ENCODE measurements at regions of chr18 and their contacts with region 1.

Region 1: GRCh38 chr18:26648509-26649192 is 100.3 kb upstream of the KCTD1 start:
- H3K4me3 Mint-ChIP-seq: no peak overlapping the region
- H3K27ac Mint-ChIP-seq: no peak overlapping the region
- H3K4me1 Mint-ChIP-seq: peaks cover 13% of the 10 kb centered on the region
- H3K27me3 Mint-ChIP-seq: peaks cover 64% of the 10 kb centered on the region

Region 2: DNA sequence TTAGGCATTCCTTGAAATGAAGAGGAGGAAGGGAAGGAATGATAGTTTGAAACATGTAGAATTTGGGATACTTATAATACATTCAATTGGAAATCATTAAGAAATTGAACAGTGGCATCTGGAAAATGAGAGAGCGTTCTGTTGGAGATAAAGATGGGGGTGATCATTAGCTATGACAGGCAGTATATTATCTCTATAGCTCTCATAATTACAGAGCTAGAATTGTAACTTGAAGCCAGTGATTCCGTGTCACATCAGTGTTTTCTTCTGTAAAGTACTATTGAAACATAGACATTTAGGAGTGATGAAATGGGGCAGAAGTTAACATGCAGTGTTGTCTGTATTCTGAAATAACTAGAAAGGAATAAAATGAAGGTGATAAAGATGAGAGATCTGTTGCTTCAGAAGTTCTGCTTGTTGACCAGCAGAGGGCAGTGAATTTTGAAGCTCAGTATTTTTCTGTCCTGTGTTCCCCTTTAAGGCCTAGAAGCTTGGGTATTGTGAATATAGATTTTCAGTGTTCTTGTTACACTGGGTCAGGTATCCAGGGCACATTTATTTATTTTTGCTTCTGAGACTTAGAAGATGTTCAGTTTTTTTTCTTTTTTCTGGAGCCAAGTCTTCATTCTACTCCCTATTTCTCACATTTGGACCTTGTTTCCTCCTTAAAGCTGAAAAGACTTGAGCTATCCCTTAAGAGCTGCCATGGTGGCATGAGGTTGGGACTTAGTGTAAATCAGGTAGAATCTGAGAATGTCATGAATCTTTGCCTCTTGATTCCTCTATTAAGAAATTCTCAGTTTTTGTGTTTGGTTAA is 265.0 kb before region 1 on chr18:
- intact Hi-C with region 1: loop called (anchors 2 kb)
- H3K4me3 Mint-ChIP-seq: no peak overlapping the region
- H3K27ac Mint-ChIP-seq: no peak overlapping the region
- H3K4me1 Mint-ChIP-seq: no peaks in the 10 kb centered on the region
- H3K27me3 Mint-ChIP-seq: no peaks in the 10 kb centered on the region

Region 3: DNA sequence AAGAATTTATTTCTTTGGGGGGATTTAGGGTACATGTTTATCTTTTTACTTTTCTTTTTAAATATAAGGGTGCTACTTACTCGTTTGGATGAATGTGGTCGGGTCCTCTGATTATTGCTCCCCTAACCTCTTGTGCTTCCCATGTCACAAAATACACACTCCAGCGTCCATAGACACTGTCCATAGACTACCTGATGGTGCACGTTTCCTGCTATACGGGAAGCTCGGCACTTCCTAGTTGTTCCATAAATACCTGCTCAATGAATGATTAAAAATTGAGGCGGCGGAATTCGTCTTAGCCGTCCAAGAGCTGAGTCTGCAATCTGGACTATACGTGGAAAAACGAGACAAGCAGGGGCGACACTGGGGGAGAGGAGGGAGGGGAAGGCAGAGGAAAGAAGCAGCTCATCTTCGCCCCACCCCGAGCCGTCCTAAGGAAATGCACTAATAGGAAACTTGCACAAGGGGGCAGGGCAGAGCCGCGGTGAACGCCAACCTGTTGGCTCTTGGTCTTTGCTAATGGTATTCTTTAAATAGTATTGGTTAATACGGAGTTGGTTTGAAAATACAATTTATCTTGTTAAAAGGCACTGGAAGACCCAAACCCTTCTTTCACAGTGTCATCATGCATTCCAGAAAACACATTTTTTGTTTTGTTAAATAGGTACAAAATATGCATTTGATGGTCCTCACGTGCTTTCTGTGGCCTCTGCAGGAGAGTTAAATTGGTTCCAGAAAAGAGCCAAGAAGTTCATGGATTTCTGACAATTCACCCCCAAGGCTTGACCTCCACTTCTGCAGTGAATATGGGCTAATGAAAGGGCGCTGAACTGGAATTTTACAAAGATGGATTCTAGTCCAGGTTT is 27.3 kb before region 1 on chr18:
- intact Hi-C with region 1: loop called (anchors 1 kb)
- H3K4me3 Mint-ChIP-seq: no peak overlapping the region
- H3K27ac Mint-ChIP-seq: no peak overlapping the region
- H3K4me1 Mint-ChIP-seq: peaks cover 12% of the 10 kb centered on the region
- H3K27me3 Mint-ChIP-seq: no peaks in the 10 kb centered on the region

Region 4: DNA sequence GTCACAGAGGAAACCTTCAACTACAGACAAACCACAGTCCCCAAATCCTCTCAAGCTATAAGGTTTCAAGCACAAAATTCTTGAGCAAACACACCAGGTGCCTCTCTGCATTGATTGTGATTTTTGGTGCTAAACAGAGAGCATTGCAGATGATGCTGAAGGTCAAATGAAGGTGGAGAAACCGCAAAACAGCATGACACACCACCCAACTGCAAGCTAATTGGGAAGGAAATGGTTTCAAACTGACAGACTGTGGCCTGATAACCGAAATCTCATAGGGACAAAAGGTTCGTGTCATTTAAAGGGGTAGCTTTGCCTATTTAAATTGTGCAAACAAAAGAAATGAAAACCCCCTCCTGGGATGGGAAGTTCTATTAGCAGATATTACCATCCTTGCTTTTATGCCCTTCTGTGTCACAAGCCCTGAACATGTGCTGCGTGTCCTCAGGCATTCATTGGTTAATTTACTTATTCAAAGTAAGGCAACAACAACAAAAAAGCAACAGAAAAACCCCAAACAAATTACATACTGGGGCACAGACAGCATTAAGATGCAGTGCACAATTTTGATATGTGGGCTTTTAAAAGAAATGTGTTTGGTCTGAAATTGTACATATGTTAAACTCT is 61.9 kb after region 1 on chr18:
- intact Hi-C with region 1: no loop called
- H3K4me3 Mint-ChIP-seq: no peak overlapping the region
- H3K27ac Mint-ChIP-seq: no peak overlapping the region
- H3K4me1 Mint-ChIP-seq: peaks cover 55% of the 10 kb centered on the region
- H3K27me3 Mint-ChIP-seq: no peaks in the 10 kb centered on the region

Region 5: GRCh38 chr18:26723981-26724380 is 75.3 kb after region 1 on chr18:
- intact Hi-C with region 1: no loop called
- H3K4me3 Mint-ChIP-seq: peak overlapping the region; percentile 48
- H3K27ac Mint-ChIP-seq: peak overlapping the region; percentile 22
- H3K4me1 Mint-ChIP-seq: peaks cover 28% of the 10 kb centered on the region
- H3K27me3 Mint-ChIP-seq: no peaks in the 10 kb centered on the region

Measured in dendritic cell treated with granulocyte-macrophage colony-stimulating factor and Interleukin-4, amounts not matched to agents 40 ng/mL and 50 ng/mL, for 4 days (primary cell).